Activated CD4-positive, alpha-beta memory T cell treated with anti-CD3 and anti-CD28 coated beads for 36 hours (primary cell): ENCODE measurements at regions of chr2 and their contacts with region 1.

Region 1: DNA sequence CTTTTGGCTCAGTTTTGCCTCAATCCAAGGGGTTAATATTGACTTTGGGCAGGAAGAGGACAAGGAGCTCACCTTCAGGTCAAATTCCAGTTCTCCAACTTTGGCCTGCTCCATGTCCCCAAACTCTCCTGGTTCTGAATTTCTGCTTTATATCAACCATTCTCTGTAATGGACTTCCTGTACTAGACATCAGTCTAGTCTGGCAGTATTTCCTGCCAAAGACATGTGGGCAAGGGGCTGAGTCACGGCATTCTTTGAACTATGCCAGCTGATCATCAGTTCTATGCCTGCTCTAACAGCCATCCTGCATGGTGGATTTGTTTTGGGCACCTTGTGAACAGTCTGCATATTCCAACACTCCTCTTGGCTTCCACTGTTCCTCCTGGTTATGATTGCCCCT is 199.4 kb downstream of the ZEB2 start:
- DNase-seq: peak; percentile 70
- H3K4me3 Mint-ChIP-seq: peak overlapping the region; percentile 3
- H3K27ac Mint-ChIP-seq: peak overlapping the region; percentile 66
- H3K4me1 Mint-ChIP-seq: peaks cover 49% of the 10 kb centered on the region
- H3K27me3 Mint-ChIP-seq: no peaks in the 10 kb centered on the region

Region 2: DNA sequence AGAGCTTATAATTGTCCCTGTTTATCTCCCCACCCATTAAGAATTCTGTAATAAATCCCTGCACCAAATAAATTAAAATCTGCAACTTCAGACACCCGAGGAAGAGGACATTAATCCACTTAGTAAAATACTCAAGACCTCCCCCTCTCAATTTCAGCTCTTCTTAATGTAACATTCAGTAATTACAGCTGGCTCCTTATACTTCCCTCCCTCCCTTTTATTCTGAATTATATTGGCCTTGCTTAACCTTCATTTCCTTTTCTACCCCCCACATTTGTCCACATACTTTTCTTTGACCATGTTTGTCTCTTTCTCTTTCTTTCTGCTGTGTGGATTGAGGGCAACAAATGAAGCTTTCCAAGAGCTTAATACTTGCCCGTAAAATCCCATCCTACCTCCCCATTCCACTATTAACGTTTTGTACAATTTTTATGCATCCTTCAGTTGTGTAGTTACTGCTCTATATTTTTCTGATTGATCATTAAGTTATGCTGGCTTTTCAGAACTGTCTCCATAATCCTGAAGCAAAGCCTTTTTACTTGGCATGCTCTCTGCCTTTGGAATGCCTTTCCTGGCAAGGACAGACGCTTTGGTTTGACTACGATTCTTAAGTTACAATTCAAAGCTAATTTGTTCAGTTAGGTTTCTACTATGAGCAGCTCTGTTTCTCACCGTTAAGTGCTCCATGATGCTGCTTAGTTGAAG is 380.7 kb before region 1 on chr2:
- CTCF ChIA-PET with region 1: no interaction called
- POLR2A ChIA-PET with region 1: no interaction called
- intact Hi-C with region 1: loop called (anchors 10 kb)
- DNase-seq: no peak
- H3K4me3 Mint-ChIP-seq: no peak overlapping the region
- H3K27ac Mint-ChIP-seq: no peak overlapping the region
- H3K4me1 Mint-ChIP-seq: peaks cover 12% of the 10 kb centered on the region
- H3K27me3 Mint-ChIP-seq: peaks cover 32% of the 10 kb centered on the region

Region 3: GRCh38 chr2:144198117-144198516 is 122.4 kb before region 1 on chr2:
- CTCF ChIA-PET with region 1: no interaction called
- POLR2A ChIA-PET with region 1: no interaction called
- intact Hi-C with region 1: loop called (anchors 2 kb)
- DNase-seq: no peak
- H3K4me3 Mint-ChIP-seq: no peak overlapping the region
- H3K27ac Mint-ChIP-seq: peak overlapping the region; percentile 75
- H3K4me1 Mint-ChIP-seq: peaks cover 58% of the 10 kb centered on the region
- H3K27me3 Mint-ChIP-seq: no peaks in the 10 kb centered on the region

Region 4: GRCh38 chr2:144310484-144310883 is 10.0 kb before region 1 on chr2:
- CTCF ChIA-PET with region 1: no interaction called
- POLR2A ChIA-PET with region 1: interaction called, 5 read pairs
- intact Hi-C with region 1: loop called (anchors 1 kb)
- DNase-seq: no peak
- H3K4me3 Mint-ChIP-seq: no peak overlapping the region
- H3K27ac Mint-ChIP-seq: no peak overlapping the region
- H3K4me1 Mint-ChIP-seq: peaks cover 21% of the 10 kb centered on the region
- H3K27me3 Mint-ChIP-seq: no peaks in the 10 kb centered on the region

Region 5: DNA sequence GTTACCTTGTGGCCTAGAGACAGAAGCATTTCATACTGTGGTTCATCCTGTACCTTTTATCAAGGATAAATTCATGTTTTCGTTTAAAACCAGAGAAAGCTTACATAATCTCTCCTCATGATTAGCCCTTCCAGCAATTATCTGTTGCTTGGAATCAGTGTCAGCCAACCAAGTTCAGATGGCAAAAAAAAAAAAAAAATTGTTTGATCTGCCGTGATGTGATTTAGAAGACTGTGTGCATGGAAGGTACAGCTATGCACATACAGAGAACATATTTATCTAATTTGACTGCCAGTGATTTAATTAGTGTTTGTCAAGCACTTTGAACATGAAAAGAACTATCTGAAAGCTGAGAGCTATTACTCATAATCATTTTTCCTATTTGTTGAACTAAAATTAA is 18.6 kb after region 1 on chr2:
- CTCF ChIA-PET with region 1: no interaction called
- POLR2A ChIA-PET with region 1: no interaction called
- intact Hi-C with region 1: no loop called
- DNase-seq: no peak
- H3K4me3 Mint-ChIP-seq: no peak overlapping the region
- H3K27ac Mint-ChIP-seq: no peak overlapping the region
- H3K4me1 Mint-ChIP-seq: peaks cover 14% of the 10 kb centered on the region
- H3K27me3 Mint-ChIP-seq: no peaks in the 10 kb centered on the region

Region 6: DNA sequence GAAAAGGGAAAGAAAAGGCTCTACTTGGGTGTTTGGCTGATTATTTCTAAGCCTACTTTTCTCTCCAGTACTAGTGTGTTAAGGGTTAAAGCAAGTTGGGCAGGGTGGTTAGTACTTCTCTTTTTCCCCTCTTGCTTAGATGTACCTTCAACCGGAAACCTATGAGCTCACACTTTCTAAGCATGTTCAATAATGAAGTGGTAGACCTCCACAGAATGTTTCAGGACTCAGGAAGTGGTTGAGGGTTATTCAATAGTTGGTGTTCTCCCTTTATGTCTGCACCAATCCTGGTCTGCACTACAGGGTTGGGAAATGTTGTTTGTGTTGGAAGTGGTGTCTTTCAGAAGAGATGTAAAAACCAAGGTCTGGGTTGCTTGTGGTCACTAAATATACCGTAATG is 62.4 kb after region 1 on chr2:
- CTCF ChIA-PET with region 1: no interaction called
- POLR2A ChIA-PET with region 1: no interaction called
- intact Hi-C with region 1: loop called (anchors 2 kb)
- DNase-seq: no peak
- H3K4me3 Mint-ChIP-seq: no peak overlapping the region
- H3K27ac Mint-ChIP-seq: no peak overlapping the region
- H3K4me1 Mint-ChIP-seq: peaks cover 29% of the 10 kb centered on the region
- H3K27me3 Mint-ChIP-seq: peaks cover 6% of the 10 kb centered on the region

Region 7: GRCh38 chr2:144516981-144517865 is 196.7 kb after region 1 on chr2:
- CTCF ChIA-PET with region 1: no interaction called
- POLR2A ChIA-PET with region 1: no interaction called
- intact Hi-C with region 1: loop called (anchors 2 kb)
- DNase-seq: peak; percentile 68
- H3K4me3 Mint-ChIP-seq: no peak overlapping the region
- H3K27ac Mint-ChIP-seq: peak overlapping the region; percentile 97
- H3K4me1 Mint-ChIP-seq: peaks cover 17% of the 10 kb centered on the region
- H3K27me3 Mint-ChIP-seq: peaks cover 46% of the 10 kb centered on the region